Activated CD4-positive, alpha-beta memory T cell treated with anti-CD3 and anti-CD28 coated beads for 36 hours (primary cell): ENCODE measurements at regions of chr4 and their contacts with region 1.

Region 1: GRCh38 chr4:82890901-82891706 is at the start of gene SEC31A:
- DNase-seq: peak; percentile 98
- H3K4me3 Mint-ChIP-seq: peak within 1 kb of the TSS; percentile 95
- H3K27ac Mint-ChIP-seq: peak within 1 kb of the TSS; percentile 95
- H3K4me1 Mint-ChIP-seq: peaks cover 35% of the 10 kb centered on the region
- H3K27me3 Mint-ChIP-seq: no peaks in the 10 kb centered on the region
- total RNA-seq, gene SEC31A: 87.8 to 88.1 TPM

Region 2: DNA sequence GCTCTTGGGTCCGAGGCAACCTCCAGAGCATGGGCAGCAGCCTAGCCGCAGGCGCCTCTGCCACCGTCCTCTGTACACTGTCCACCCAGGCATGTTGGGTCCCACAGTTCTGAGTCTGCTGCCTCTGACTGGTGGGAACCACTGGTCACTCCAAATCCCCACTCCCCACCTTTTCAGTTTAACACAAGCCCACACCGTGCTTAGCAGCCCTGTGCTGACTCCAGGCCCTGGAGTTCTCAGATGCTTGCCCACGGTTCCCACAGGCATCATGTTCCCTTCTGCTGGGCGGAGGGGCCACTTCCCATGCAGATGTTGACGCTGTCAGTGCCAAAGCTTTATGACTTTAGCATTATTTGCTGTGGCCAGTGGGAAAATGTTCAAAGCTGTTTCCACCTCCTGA is 197.1 kb before region 1 on chr4:
- CTCF ChIA-PET with region 1: no interaction called
- POLR2A ChIA-PET with region 1: no interaction called
- intact Hi-C with region 1: no loop called
- DNase-seq: no peak
- H3K4me3 Mint-ChIP-seq: no peak overlapping the region
- H3K27ac Mint-ChIP-seq: no peak overlapping the region
- H3K4me1 Mint-ChIP-seq: no peaks in the 10 kb centered on the region
- H3K27me3 Mint-ChIP-seq: peaks cover 6% of the 10 kb centered on the region

Region 3: GRCh38 chr4:82865592-82865991 is 25.5 kb before region 1 on chr4:
- CTCF ChIA-PET with region 1: interaction called, 3 read pairs
- POLR2A ChIA-PET with region 1: no interaction called
- intact Hi-C with region 1: loop called (anchors 1 kb)
- DNase-seq: peak; percentile 20
- H3K4me3 Mint-ChIP-seq: no peak overlapping the region
- H3K27ac Mint-ChIP-seq: peak overlapping the region; percentile 69
- H3K4me1 Mint-ChIP-seq: peaks cover 25% of the 10 kb centered on the region
- H3K27me3 Mint-ChIP-seq: no peaks in the 10 kb centered on the region

Region 4: DNA sequence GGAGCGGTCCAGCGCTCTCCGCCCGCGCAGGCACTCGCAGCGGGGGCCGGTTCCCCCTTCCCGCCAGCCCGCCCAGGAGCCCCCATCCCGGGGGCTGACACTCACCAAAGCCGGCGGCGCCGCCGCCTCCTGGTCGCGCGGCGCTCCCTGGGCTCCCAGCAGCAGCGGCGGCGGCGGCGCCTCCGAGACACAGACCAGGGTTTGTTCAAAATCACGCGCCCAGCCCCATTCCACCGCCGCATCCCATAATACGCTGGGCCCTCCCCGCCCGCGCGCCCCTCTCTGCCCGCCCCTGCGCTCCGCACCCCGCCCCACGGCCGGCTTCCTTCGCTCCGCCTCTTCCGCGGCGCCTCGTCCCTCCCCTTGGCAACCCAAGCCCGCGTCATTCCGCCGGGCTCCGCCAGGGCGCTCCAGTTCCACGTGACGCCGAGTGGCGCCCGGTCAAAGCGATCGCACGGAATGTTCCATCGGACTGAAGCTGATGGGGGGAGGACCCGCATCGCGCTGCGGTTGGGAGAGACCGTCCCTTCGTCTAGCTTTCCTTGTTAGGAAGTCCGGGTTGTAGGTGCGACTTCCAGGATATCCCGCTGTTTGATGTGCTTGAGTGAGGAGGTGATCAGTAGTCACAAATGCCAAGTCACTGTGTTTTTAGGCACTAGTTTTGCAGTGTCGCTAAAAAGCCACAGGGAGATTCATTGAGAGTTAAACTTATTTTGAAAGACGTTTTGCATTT is 121.7 kb after region 1 on chr4:
- CTCF ChIA-PET with region 1: no interaction called
- POLR2A ChIA-PET with region 1: interaction called, 3 read pairs
- intact Hi-C with region 1: loop called (anchors 1 kb)
- DNase-seq: peak; percentile 98
- H3K4me3 Mint-ChIP-seq: peak overlapping the region; percentile 92
- H3K27ac Mint-ChIP-seq: peak overlapping the region; percentile 92
- H3K4me1 Mint-ChIP-seq: peaks cover 36% of the 10 kb centered on the region
- H3K27me3 Mint-ChIP-seq: no peaks in the 10 kb centered on the region

Region 5: GRCh38 chr4:83034630-83035494 is 143.8 kb after region 1 on chr4 and contains the start of gene COPS4:
- CTCF ChIA-PET with region 1: interaction called, 6 read pairs
- POLR2A ChIA-PET with region 1: no interaction called
- intact Hi-C with region 1: loop called (anchors 1 kb)
- DNase-seq: peak; percentile 97
- H3K4me3 Mint-ChIP-seq: peak within 1 kb of the TSS; percentile 85
- H3K27ac Mint-ChIP-seq: peak within 1 kb of the TSS; percentile 98
- H3K4me1 Mint-ChIP-seq: peaks cover 28% of the 10 kb centered on the region
- H3K27me3 Mint-ChIP-seq: no peaks in the 10 kb centered on the region
- total RNA-seq, gene COPS4: 38.5 to 40.6 TPM

Region 6: DNA sequence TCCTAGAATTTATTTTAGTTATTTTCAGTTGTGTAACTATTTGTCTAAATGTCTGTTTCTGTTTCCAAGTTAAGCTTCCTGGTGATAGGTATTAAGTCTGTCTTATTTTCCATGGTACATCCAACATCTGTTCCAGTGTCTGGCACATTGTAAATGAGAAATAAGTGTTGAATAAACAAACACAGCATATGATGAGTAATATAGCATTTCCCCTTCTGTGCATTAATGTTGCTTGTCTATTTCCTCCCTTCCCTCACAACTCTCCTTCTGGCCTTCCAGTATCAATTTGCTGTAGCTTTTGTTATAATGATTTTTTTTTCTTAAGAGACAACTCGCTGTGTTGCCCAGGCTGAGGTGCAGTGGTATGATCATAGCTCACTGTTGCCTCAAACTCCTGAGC is 180.0 kb after region 1 on chr4:
- CTCF ChIA-PET with region 1: no interaction called
- POLR2A ChIA-PET with region 1: no interaction called
- intact Hi-C with region 1: no loop called
- DNase-seq: no peak
- H3K4me3 Mint-ChIP-seq: no peak overlapping the region
- H3K27ac Mint-ChIP-seq: no peak overlapping the region
- H3K4me1 Mint-ChIP-seq: peaks cover 8% of the 10 kb centered on the region
- H3K27me3 Mint-ChIP-seq: no peaks in the 10 kb centered on the region